ENCODE measurements at regions of chr1 and their contacts with region 1.

Region 1: DNA sequence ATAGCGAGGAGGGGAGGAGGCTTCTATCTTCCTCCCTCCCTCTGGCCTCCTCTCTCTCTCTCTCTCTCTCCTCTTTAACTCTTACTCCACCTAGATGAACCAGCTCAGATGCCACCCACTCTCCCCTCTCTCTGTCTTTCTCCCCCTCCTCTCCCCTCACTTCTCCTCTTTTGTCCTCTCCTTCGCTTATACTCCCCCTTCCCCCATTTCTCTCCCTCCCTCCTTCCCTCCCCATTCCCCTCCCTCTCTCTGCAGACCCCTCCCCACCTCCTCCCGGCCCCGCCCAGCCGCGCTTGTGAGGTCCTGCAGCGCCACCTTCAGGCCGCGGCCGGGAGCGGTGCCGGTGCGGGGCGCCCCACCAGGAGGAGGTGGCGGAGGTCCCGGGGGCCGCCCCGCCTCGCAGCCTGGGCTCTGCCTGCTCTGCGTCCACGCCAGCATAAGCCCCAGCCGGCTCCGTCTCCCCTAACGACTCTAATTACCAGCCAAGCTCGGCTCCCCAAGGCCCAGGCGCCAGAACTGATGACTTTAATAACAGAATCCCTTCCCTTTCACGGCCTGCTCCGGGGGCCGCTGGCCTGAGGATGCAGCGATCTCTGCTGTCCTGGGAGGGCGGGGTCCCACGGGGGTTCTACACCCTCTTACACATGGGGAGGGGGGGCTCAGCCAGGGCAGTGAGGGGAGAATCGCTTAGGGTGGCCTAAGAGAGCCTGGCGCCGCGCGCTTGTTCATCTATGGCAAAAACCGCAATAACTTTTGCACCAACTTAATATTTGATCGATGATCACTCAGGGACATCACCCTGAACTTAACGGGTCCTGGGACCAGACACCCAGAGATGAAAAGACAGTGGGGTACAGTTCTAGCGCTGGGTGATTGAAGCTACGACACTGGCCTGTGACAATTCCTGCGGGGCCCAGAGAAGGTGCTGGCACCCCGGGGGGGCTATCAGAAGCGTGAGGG is 637.3 kb downstream of the MATN1 start:
- DNase-seq: peak; percentile 50
- H3K4me3 ChIP-seq: no peak overlapping the region
- H3K27ac ChIP-seq: no peak overlapping the region
- H3K4me1 ChIP-seq: no peaks in the 10 kb centered on the region
- H3K27me3 ChIP-seq: no peaks in the 10 kb centered on the region
- CTCF ChIP-seq: peak; percentile 56

Region 2: GRCh38 chr1:29230553-29231378 is 855.3 kb before region 1 on chr1 and contains the start of gene MECR:
- intact Hi-C with region 1: loop called (anchors 10 kb)
- DNase-seq: peak; percentile 96
- H3K4me3 ChIP-seq: peak within 1 kb of the TSS; percentile 98
- H3K27ac ChIP-seq: no peak within 1 kb of the TSS
- H3K4me1 ChIP-seq: peaks cover 4% of the 10 kb centered on the region
- H3K27me3 ChIP-seq: no peaks in the 10 kb centered on the region
- CTCF ChIP-seq: no peak
- total RNA-seq, gene MECR: 12.9 to 21.8 TPM

Region 3: DNA sequence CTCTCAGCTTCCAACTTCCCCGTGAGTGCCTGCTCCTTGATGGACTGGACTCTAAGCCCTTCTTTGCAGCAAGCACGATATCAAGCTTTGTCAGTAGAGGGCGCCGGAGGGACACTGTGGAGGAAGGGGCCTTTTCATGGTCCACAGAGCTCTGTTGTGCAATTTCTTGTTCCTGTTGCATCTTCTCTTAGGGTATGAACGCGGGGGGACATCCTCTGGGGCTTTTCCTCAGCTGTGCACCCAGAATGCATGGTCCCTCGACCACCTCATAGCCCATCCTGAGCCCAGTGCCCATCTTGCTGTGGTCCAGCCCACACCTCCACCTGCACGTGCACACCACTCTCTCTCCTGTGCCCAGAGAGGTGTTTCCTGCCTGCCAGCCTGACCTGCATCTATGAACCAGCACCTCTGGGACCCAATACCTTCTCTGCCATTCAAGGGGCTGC is 293.0 kb before region 1 on chr1:
- intact Hi-C with region 1: loop called (anchors 10 kb)
- DNase-seq: peak; percentile 85
- H3K4me3 ChIP-seq: no peak overlapping the region
- H3K27ac ChIP-seq: no peak overlapping the region
- H3K4me1 ChIP-seq: no peaks in the 10 kb centered on the region
- H3K27me3 ChIP-seq: no peaks in the 10 kb centered on the region
- CTCF ChIP-seq: peak; percentile 64

Region 4: DNA sequence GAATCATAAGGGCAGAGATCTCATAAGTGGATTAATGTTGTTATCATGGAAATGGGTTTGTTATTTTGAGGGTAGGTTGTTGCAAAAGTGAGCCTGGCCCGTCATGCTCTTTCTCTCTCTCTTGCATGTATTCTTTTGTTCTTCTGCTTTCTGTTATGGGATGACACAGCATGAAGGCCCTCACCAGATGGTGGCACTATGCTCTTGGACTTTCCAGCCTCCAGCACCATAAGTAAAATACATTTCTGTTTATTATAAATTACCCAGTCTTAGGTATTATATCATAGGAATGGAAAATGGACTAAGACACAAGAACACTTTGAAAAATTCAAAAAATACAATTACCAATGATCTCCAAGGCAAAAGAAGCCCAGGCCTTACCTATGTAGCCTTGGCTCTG is 173.7 kb before region 1 on chr1:
- intact Hi-C with region 1: loop called (anchors 5 kb)
- DNase-seq: no peak
- H3K4me3 ChIP-seq: no peak overlapping the region
- H3K27ac ChIP-seq: no peak overlapping the region
- H3K4me1 ChIP-seq: no peaks in the 10 kb centered on the region
- H3K27me3 ChIP-seq: no peaks in the 10 kb centered on the region
- CTCF ChIP-seq: peak; percentile 13